Activated CD8-positive, alpha-beta T cell treated with anti-CD3 and anti-CD28 coated beads, Interleukin-2, amount 10 ng/mL, durations not matched to agents 7 days and 5 days (primary cell): ENCODE measurements at regions of chr15 and their contacts with region 1.

Region 1: GRCh38 chr15:84833447-84834228 is 16.5 kb downstream of the ALPK3 start:
- DNase-seq: no peak
- ATAC-seq: no peak
- H3K4me3 Mint-ChIP-seq: no peak overlapping the region
- H3K27ac Mint-ChIP-seq: no peak overlapping the region
- H3K4me1 Mint-ChIP-seq: no peaks in the 10 kb centered on the region
- H3K27me3 Mint-ChIP-seq: peaks cover 34% of the 10 kb centered on the region

Region 2: GRCh38 chr15:84748274-84749110 is 85.1 kb before region 1 on chr15 and contains the start of gene ZNF592:
- CTCF ChIA-PET with region 1: no interaction called
- POLR2A ChIA-PET with region 1: no interaction called
- DNase-seq: peak; percentile 82
- ATAC-seq: peak; percentile 68
- H3K4me3 Mint-ChIP-seq: peak within 1 kb of the TSS; percentile 96
- H3K27ac Mint-ChIP-seq: peak within 1 kb of the TSS; percentile 95
- H3K4me1 Mint-ChIP-seq: peaks cover 51% of the 10 kb centered on the region
- H3K27me3 Mint-ChIP-seq: no peaks in the 10 kb centered on the region
- total RNA-seq, gene ZNF592: 36.5 to 36.6 TPM

Region 3: DNA sequence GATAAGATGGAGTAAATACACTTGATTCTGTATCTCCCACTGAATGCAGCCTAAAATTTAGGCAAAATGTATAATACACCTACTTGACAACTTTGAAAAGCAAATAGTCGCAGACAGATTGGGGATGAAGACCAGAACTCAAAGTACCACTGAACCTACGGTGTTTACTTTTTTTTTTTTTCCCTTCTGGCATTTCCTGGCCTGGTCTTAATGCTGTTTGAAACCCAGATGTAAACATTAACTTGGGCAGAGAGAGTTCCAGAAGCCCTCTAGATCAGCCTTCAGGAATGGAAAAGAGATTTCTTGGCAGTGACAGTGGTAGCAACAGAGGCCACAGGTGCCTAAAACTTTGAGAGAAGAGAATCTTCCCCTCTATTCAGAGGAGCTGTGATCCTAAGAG is 11.3 kb after region 1 on chr15:
- CTCF ChIA-PET with region 1: interaction called, 12 read pairs
- POLR2A ChIA-PET with region 1: no interaction called
- DNase-seq: no peak
- ATAC-seq: no peak
- H3K4me3 Mint-ChIP-seq: no peak overlapping the region
- H3K27ac Mint-ChIP-seq: no peak overlapping the region
- H3K4me1 Mint-ChIP-seq: no peaks in the 10 kb centered on the region
- H3K27me3 Mint-ChIP-seq: peaks cover 5% of the 10 kb centered on the region